ENCODE measurements at regions of chr10 and their contacts with region 1.

Region 1: DNA sequence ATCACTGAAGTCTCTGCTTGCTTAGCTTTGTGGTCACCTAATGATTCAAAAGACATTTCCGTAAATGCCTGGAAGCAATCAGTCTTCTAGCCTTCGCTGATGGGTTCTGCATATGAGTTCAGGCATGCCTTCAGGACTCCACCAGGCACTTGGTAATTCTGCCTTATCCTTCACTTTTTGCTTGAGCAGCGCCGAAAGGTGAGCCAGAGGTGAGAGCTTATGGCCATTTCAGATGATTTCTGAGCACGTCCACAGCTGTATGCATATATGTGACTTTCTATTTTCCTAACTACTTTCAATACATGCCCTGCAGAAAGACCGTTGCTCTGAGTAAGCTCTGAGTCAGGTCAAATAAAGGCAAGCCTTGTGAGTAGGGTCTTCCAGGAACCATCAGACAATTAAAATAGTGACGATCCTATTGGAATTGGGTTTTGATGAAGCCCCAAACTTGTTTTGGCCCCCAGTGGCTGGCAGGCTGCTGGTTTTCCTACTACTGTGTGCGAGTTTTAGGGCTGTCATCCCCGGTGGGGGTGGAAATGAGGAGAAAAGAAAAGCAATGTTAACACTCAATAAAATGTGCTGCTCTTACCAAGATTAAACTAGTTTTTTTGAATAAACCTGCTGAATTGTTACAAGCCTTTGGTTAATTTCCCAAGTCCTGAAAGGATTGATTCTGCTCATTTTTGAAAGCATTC is 154.4 kb upstream of the AKR1E2 start:
- DNase-seq: peak; percentile 98
- H3K4me3 ChIP-seq: peak overlapping the region; percentile 35 to 41 (median 38)
- H3K27ac ChIP-seq: peak overlapping the region; percentile 100
- H3K4me1 ChIP-seq: peaks cover 51% of the 10 kb centered on the region
- H3K27me3 ChIP-seq: no peaks in the 10 kb centered on the region
- CTCF ChIP-seq: no peak

Region 2: GRCh38 chr10:3226960-3227744 is 1444.4 kb before region 1 on chr10:
- CTCF ChIA-PET with region 1: no interaction called
- dilution Hi-C with region 1: no loop called
- in situ Hi-C with region 1: loop called in 1 of 2 experiments (anchors 25 kb)
- intact Hi-C with region 1: loop called (anchors 5 kb)
- DNase-seq: peak; percentile 87
- H3K4me3 ChIP-seq: peak overlapping the region in 1 of 3 experiments; percentile 2
- H3K27ac ChIP-seq: peak overlapping the region; percentile 81
- H3K4me1 ChIP-seq: peaks cover 32% of the 10 kb centered on the region
- H3K27me3 ChIP-seq: no peaks in the 10 kb centered on the region
- CTCF ChIP-seq: no peak

Region 3: GRCh38 chr10:3852147-3852904 is 819.3 kb before region 1 on chr10:
- CTCF ChIA-PET with region 1: no interaction called
- dilution Hi-C with region 1: no loop called
- in situ Hi-C with region 1: no loop called
- intact Hi-C with region 1: loop called (anchors 5 kb)
- DNase-seq: peak; percentile 100
- H3K4me3 ChIP-seq: no peak overlapping the region
- H3K27ac ChIP-seq: peak overlapping the region; percentile 99
- H3K4me1 ChIP-seq: peaks cover 39% of the 10 kb centered on the region
- H3K27me3 ChIP-seq: no peaks in the 10 kb centered on the region
- CTCF ChIP-seq: no peak

Region 4: DNA sequence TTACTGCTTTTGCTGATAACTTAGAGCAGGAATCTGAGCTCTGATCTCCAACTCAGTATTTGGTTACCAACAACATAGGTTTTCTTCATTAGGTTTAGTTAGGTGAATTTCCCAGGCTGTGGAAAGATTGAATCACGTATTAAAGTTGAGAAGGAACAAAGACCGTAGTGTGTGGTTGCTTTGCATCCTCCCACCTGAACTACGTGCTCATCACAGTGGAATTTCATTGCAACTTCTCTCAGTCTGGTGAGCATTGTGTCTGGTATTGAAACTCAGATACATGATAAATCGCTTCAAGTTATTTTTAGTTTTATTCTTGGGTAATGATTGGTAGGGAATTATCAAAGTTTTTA is 15.0 kb after region 1 on chr10:
- CTCF ChIA-PET with region 1: no interaction called
- dilution Hi-C with region 1: no loop called
- in situ Hi-C with region 1: no loop called
- intact Hi-C with region 1: loop called (anchors 2 kb)
- DNase-seq: peak; percentile 99
- H3K4me3 ChIP-seq: peak overlapping the region in 2 of 3 experiments; percentile 34 to 35
- H3K27ac ChIP-seq: peak overlapping the region; percentile 100
- H3K4me1 ChIP-seq: peaks cover 55% of the 10 kb centered on the region
- H3K27me3 ChIP-seq: no peaks in the 10 kb centered on the region
- CTCF ChIP-seq: no peak

Region 5: GRCh38 chr10:4704034-4704545 is 32.5 kb after region 1 on chr10:
- CTCF ChIA-PET with region 1: no interaction called
- dilution Hi-C with region 1: no loop called
- in situ Hi-C with region 1: no loop called
- intact Hi-C with region 1: loop called (anchors 2 kb)
- DNase-seq: peak; percentile 99
- H3K4me3 ChIP-seq: no peak overlapping the region
- H3K27ac ChIP-seq: peak overlapping the region; percentile 97
- H3K4me1 ChIP-seq: peaks cover 17% of the 10 kb centered on the region
- H3K27me3 ChIP-seq: no peaks in the 10 kb centered on the region
- CTCF ChIP-seq: no peak

Region 6: GRCh38 chr10:4733151-4733842 is 61.7 kb after region 1 on chr10:
- CTCF ChIA-PET with region 1: no interaction called
- dilution Hi-C with region 1: no loop called
- in situ Hi-C with region 1: no loop called
- intact Hi-C with region 1: loop called (anchors 2 kb)
- DNase-seq: peak; percentile 96
- H3K4me3 ChIP-seq: no peak overlapping the region
- H3K27ac ChIP-seq: peak overlapping the region; percentile 62
- H3K4me1 ChIP-seq: peaks cover 14% of the 10 kb centered on the region
- H3K27me3 ChIP-seq: no peaks in the 10 kb centered on the region
- CTCF ChIP-seq: peak in 1 of 2 donors; percentile 21